Activated CD4-positive, alpha-beta memory T cell treated with anti-CD3 and anti-CD28 coated beads for 36 hours (primary cell): ENCODE measurements at regions of chr14 and their contacts with region 1.

Region 1: DNA sequence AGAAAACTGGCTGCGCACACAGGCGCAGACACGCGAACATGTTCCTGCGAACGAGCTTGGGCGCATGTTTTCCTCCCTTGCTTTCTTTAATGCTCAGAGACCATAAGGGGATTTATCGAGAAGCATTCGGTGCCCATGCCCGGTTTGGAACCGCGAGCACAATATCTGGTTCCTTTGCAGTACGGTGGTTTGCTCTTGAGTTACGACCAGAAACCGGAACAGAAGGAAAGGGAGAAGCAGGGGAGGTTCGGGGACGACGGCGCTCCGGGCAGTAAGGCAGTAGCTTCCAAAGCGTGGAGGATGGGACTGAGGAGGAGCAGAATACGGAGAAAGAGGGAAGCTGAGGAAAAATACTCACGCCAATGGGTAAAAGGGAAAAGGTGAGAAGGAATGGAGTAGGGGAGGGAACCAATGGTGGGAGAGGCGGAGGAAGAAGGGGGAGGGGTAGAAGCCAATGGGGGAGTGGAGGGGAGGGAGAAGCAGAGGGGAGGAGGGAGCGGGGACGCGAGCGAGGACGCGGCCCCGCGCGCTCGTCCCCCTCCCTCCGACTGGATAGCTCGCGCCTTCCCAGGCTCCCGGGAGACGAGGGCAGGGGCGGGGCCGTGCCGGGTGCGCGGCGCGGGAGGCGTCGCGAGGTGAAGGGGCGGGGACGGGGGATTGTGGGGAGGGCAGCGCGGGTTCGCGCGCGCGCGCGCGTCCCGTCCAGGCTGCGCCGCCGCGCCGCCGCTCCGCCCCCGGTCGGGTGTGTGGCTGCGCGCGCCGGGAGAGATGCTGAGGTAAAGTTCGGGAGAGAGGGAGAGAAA is 625 bp upstream of the ARHGAP5 start:
- DNase-seq: peak; percentile 90
- H3K4me3 Mint-ChIP-seq: peak overlapping the region; percentile 94
- H3K27ac Mint-ChIP-seq: peak overlapping the region; percentile 85
- H3K4me1 Mint-ChIP-seq: peaks cover 26% of the 10 kb centered on the region
- H3K27me3 Mint-ChIP-seq: peaks cover 2% of the 10 kb centered on the region

Region 2: GRCh38 chr14:31026395-31027118 is 1049.9 kb before region 1 on chr14:
- CTCF ChIA-PET with region 1: no interaction called
- POLR2A ChIA-PET with region 1: no interaction called
- intact Hi-C with region 1: loop called (anchors 10 kb)
- DNase-seq: peak; percentile 95
- H3K4me3 Mint-ChIP-seq: peak overlapping the region; percentile 92
- H3K27ac Mint-ChIP-seq: peak overlapping the region; percentile 91
- H3K4me1 Mint-ChIP-seq: peaks cover 56% of the 10 kb centered on the region
- H3K27me3 Mint-ChIP-seq: no peaks in the 10 kb centered on the region

Region 3: GRCh38 chr14:31456841-31457664 is 619.4 kb before region 1 on chr14 and contains the start of gene DTD2:
- CTCF ChIA-PET with region 1: no interaction called
- POLR2A ChIA-PET with region 1: no interaction called
- intact Hi-C with region 1: loop called (anchors 2 kb)
- DNase-seq: peak; percentile 94
- H3K4me3 Mint-ChIP-seq: peak within 1 kb of the TSS; percentile 95
- H3K27ac Mint-ChIP-seq: peak within 1 kb of the TSS; percentile 79
- H3K4me1 Mint-ChIP-seq: peaks cover 25% of the 10 kb centered on the region
- H3K27me3 Mint-ChIP-seq: no peaks in the 10 kb centered on the region
- total RNA-seq, gene DTD2: 19.1 to 20.2 TPM

Region 4: GRCh38 chr14:31937721-31938346 is 138.6 kb before region 1 on chr14:
- CTCF ChIA-PET with region 1: interaction called, 5 read pairs
- POLR2A ChIA-PET with region 1: interaction called, 3 read pairs
- intact Hi-C with region 1: loop called (anchors 1 kb)
- DNase-seq: peak; percentile 91
- H3K4me3 Mint-ChIP-seq: peak overlapping the region; percentile 16
- H3K27ac Mint-ChIP-seq: peak overlapping the region; percentile 80
- H3K4me1 Mint-ChIP-seq: peaks cover 25% of the 10 kb centered on the region
- H3K27me3 Mint-ChIP-seq: no peaks in the 10 kb centered on the region

Region 5: GRCh38 chr14:32190672-32191071 is 114.2 kb after region 1 on chr14:
- CTCF ChIA-PET with region 1: no interaction called
- POLR2A ChIA-PET with region 1: no interaction called
- intact Hi-C with region 1: loop called (anchors 2 kb)
- DNase-seq: no peak
- H3K4me3 Mint-ChIP-seq: no peak overlapping the region
- H3K27ac Mint-ChIP-seq: no peak overlapping the region
- H3K4me1 Mint-ChIP-seq: peaks cover 10% of the 10 kb centered on the region
- H3K27me3 Mint-ChIP-seq: peaks cover 3% of the 10 kb centered on the region

Region 6: GRCh38 chr14:32252030-32252670 is 175.7 kb after region 1 on chr14:
- CTCF ChIA-PET with region 1: interaction called, 299 read pairs
- POLR2A ChIA-PET with region 1: no interaction called
- intact Hi-C with region 1: loop called (anchors 1 kb)
- DNase-seq: peak; percentile 50
- H3K4me3 Mint-ChIP-seq: no peak overlapping the region
- H3K27ac Mint-ChIP-seq: no peak overlapping the region
- H3K4me1 Mint-ChIP-seq: no peaks in the 10 kb centered on the region
- H3K27me3 Mint-ChIP-seq: no peaks in the 10 kb centered on the region